Caco-2 (cell line): ENCODE measurements at regions of chr1 and their contacts with region 1.

Region 1: GRCh38 chr1:173420330-173420806 is 56.8 kb upstream of the PRDX6 start:
- DNase-seq: peak; percentile 61 to 73
- H3K4me3 ChIP-seq: no peak overlapping the region
- H3K4me3 Mint-ChIP-seq: no peak overlapping the region
- H3K27ac Mint-ChIP-seq: no peak overlapping the region
- H3K4me1 ChIP-seq: peaks cover 21% of the 10 kb centered on the region
- H3K4me1 Mint-ChIP-seq: peaks cover 22% of the 10 kb centered on the region
- H3K27me3 ChIP-seq: no peaks in the 10 kb centered on the region
- H3K27me3 Mint-ChIP-seq: no peaks in the 10 kb centered on the region
- CTCF ChIP-seq: peak; percentile 69 to 85

Region 2: DNA sequence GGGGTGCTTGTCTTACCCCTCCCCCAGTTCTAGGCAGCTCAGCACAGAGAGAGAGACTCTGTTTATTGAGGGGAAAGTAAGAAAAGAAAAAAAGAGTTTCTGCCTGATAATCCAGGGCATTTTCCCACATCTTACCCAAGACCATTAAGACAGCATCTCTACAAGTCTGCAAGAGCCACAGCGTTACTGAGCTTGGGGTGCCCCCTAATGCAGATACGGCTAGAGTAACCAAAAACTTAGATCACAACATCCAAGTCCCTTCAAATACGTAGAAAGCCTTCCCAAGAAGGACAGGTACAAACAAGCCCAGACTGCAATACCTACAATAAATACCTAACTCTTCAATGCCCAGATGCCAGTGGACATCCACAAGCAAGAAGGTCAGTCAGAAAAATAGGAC is 208.5 kb after region 1 on chr1:
- CTCF ChIA-PET with region 1: no interaction called
- POLR2A ChIA-PET with region 1: no interaction called
- intact Hi-C with region 1: loop called (anchors 1 kb)
- DNase-seq: peak in 1 of 2 experiments; percentile 19
- H3K4me3 ChIP-seq: no peak overlapping the region
- H3K4me3 Mint-ChIP-seq: no peak overlapping the region
- H3K27ac Mint-ChIP-seq: no peak overlapping the region
- H3K4me1 ChIP-seq: no peaks in the 10 kb centered on the region
- H3K4me1 Mint-ChIP-seq: no peaks in the 10 kb centered on the region
- H3K27me3 ChIP-seq: no peaks in the 10 kb centered on the region
- H3K27me3 Mint-ChIP-seq: peaks cover 14% of the 10 kb centered on the region
- CTCF ChIP-seq: no peak

Region 3: GRCh38 chr1:173688300-173688699 is 267.9 kb after region 1 on chr1:
- CTCF ChIA-PET with region 1: no interaction called
- POLR2A ChIA-PET with region 1: no interaction called
- intact Hi-C with region 1: loop called (anchors 5 kb)
- DNase-seq: no peak
- H3K4me3 ChIP-seq: no peak overlapping the region
- H3K4me3 Mint-ChIP-seq: no peak overlapping the region
- H3K27ac Mint-ChIP-seq: no peak overlapping the region
- H3K4me1 ChIP-seq: no peaks in the 10 kb centered on the region
- H3K4me1 Mint-ChIP-seq: peaks cover 14% of the 10 kb centered on the region
- H3K27me3 ChIP-seq: no peaks in the 10 kb centered on the region
- H3K27me3 Mint-ChIP-seq: peaks cover 11% of the 10 kb centered on the region
- CTCF ChIP-seq: no peak